ENCODE measurements at regions of chr12 and their contacts with region 1.

Region 1: DNA sequence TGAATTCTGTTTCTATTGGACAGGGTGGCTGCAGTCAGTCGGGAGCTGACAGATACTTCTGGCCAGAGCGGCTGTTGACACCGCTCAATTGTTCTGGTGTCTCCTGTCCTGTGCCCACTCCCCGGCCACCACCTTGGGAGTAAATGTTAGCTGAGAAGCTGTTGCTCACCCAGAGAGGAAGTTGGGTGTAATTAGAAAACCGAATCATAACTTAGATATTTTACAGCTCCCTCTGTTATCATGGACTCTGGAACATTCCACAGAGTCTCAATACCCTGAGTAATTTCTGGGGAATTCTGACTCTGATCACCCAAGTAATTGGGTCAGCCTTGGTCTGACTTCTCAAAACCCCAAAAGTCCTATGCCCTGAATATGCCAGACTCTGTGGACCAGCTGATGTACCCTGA is 58.3 kb upstream of the RFLNA start:
- DNase-seq: no peak
- ATAC-seq: no peak
- H3K4me3 ChIP-seq: no peak overlapping the region
- H3K27ac ChIP-seq: no peak overlapping the region
- H3K4me1 ChIP-seq: peaks cover 0 to 19% (median 0%) of the 10 kb centered on the region in 9 donors
- H3K27me3 ChIP-seq: peaks cover 0 to 14% (median 0%) of the 10 kb centered on the region in 7 donors
- CTCF ChIP-seq: no peak

Region 2: GRCh38 chr12:123743002-123743401 is 493.6 kb before region 1 on chr12:
- intact Hi-C with region 1: loop called in 1 of 10 experiments (anchors 5 kb)
- DNase-seq: no peak
- ATAC-seq: peak in 1 of 8 donors; percentile 11
- H3K4me3 ChIP-seq: no peak overlapping the region
- H3K27ac ChIP-seq: peak overlapping the region in 1 of 10 donors; percentile 10
- H3K4me1 ChIP-seq: peaks cover 0 to 10% (median 0%) of the 10 kb centered on the region in 9 donors
- H3K27me3 ChIP-seq: no peaks in the 10 kb centered on the region
- CTCF ChIP-seq: no peak

Region 3: GRCh38 chr12:124248941-124249825 is 12.6 kb after region 1 on chr12:
- intact Hi-C with region 1: no loop called
- DNase-seq: no peak
- ATAC-seq: no peak
- H3K4me3 ChIP-seq: no peak overlapping the region
- H3K27ac ChIP-seq: no peak overlapping the region
- H3K4me1 ChIP-seq: peaks cover 0 to 4% (median 0%) of the 10 kb centered on the region in 9 donors
- H3K27me3 ChIP-seq: peaks cover 0 to 22% (median 6%) of the 10 kb centered on the region in 7 donors
- CTCF ChIP-seq: no peak